ENCODE measurements at regions of chr5 and their contacts with region 1.

Region 1: DNA sequence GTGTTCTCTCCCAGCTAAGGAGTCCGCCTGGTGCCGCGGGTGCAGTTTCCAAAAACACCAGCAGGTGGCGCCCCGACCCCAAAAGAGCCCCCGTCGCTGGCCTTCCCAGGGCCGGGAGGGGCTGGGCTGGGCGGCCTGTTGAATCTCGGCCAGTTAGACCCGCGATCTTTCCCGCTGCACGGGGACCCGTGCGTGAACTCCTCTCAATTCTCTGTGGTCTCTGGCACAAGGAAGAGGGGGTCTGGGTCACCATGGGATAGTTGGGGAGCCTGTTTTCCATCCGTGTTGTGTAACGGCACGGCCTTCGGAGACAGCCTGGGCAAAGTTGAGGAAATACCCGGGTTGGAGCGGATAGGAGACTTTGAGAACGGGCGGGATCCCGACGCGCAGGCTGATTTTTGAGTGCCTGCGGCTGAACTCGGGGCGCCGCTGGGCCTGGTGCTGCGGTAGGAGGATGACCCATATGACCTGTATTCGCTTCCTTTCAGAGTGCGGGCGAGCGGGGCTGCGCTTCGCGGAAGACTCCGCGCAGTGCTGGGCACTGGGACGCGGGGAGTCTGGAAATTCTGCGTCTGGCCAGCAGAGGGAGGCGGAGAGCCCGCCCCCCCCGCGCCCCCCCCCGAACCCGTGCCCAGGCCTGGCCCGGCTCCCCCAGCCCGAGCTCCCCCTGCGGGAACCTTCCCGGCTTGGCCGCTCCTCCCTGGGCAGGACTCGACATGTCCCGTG is 7.9 kb upstream of the PSD2 start:
- DNase-seq: peak; percentile 96
- CTCF ChIP-seq: peak; percentile 87

Region 2: GRCh38 chr5:139849942-139850341 is 62.2 kb after region 1 on chr5:
- in situ Hi-C with region 1: loop called (anchors 10 kb)
- DNase-seq: no peak
- CTCF ChIP-seq: no peak

Region 3: DNA sequence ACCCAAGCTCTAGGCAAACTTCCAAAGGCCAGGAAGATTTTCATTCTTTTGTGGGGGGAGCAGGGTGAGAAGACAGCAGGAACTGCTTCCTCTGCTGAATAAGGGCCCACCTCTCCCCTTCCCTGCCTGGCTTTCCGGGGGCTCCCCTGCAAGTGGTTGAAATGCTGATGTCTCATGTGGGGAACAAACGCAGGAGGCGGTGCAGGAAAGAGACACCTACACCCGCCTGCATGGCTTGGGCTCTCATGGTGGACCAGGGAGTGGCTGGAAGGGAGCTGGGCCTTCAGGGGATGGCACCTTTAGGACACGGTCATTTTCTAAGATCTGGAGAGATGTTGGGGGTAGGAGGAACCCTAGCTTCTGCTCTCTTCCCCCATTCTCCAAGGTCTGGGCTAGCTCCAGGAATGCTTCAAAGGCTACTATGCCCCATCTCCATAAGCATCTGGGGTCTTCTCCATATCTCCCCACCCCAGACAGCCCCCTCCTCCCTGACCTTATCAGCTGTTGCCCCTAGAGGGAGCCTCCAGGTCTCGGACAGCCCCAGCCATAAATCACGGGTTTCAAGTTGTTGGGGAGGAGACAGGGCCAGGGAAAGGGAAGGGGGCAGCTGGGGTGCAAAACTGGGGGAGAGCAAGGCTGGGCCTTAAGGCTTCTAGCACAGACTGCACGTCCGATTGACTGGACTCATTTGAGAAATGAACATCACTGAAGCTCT is 84.5 kb after region 1 on chr5:
- in situ Hi-C with region 1: no loop called
- DNase-seq: no peak
- CTCF ChIP-seq: no peak

Region 4: DNA sequence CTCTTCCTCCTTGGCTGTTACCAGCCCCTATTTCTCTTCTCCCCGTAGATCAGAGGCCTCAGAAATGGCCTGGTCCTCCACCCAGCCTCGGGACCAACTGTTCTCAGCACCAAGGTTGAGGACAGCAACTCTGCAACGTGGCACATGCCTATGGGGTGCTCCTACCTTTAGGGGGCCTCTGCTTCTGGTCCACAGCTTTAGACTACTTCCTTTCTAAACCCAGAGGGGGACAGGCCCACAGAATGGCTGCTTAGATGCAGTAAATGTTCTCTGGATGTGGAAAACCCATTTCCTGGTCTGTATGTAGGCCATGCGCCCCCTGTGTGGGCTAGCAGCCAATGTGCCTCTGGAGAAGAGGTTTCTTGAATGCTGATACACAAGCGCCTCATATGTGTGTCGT is 186.9 kb after region 1 on chr5:
- in situ Hi-C with region 1: loop called (anchors 5 kb)
- DNase-seq: peak; percentile 30
- CTCF ChIP-seq: no peak